Sigmoid colon (tissue), 7 donors: ENCODE measurements at regions of chr2 and their contacts with region 1.

Region 1: GRCh38 chr2:46097714-46098480 is 199.3 kb upstream of the EPAS1 start:
- DNase-seq: peak; percentile 90
- H3K4me3 ChIP-seq: no peak overlapping the region
- H3K27ac ChIP-seq: peak overlapping the region; percentile 64 to 78 (median 72)
- H3K4me1 ChIP-seq: peaks cover 0 to 26% (median 21%) of the 10 kb centered on the region in 4 donors
- H3K27me3 ChIP-seq: no peaks in the 10 kb centered on the region
- CTCF ChIP-seq: no peak
- EP300 ChIP-seq: peak in 2 of 4 donors; percentile 42 to 77
- POLR2A ChIP-seq: no peak

Region 2: GRCh38 chr2:46164581-46165301 is 66.8 kb after region 1 on chr2:
- intact Hi-C with region 1: loop called (anchors 5 kb)
- DNase-seq: peak; percentile 92
- H3K4me3 ChIP-seq: no peak overlapping the region
- H3K27ac ChIP-seq: peak overlapping the region; percentile 51 to 88 (median 74)
- H3K4me1 ChIP-seq: peaks cover 0 to 67% (median 41%) of the 10 kb centered on the region in 4 donors
- H3K27me3 ChIP-seq: no peaks in the 10 kb centered on the region
- CTCF ChIP-seq: no peak
- EP300 ChIP-seq: no peak
- POLR2A ChIP-seq: no peak

Region 3: DNA sequence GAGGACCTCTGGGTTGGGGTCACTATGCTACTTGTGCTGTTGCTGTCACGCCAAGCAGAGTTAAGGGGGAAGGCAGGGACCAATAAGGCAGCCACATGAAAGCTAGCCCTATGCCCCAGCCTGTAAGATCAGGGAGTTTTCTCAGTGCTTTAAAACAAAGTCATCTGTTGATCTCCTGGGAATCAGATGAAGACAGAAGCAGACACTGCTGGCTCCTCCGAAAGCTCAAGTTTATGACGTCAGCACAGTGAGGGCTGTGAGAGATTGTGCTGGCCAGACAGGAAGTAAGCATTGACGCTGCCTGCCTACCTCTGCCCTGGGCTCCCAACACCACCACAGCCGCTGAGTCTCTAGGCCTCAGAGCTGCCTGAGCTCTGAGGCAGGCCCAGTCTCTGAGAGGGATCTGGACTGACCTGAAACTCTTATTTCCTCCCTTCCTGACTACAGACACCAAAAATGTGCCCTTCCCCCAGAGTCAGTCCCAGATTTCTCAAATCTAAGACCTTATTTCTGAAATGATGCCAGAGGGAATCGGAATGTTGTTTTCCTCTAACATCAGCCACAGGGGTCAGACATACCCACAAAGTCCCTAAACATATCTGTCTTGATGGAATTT is 81.2 kb after region 1 on chr2:
- intact Hi-C with region 1: loop called (anchors 5 kb)
- DNase-seq: peak; percentile 90
- H3K4me3 ChIP-seq: no peak overlapping the region
- H3K27ac ChIP-seq: peak overlapping the region; percentile 33 to 70 (median 44)
- H3K4me1 ChIP-seq: peaks cover 0 to 23% (median 12%) of the 10 kb centered on the region in 4 donors
- H3K27me3 ChIP-seq: no peaks in the 10 kb centered on the region
- CTCF ChIP-seq: no peak
- EP300 ChIP-seq: no peak
- POLR2A ChIP-seq: no peak

Region 4: GRCh38 chr2:47402805-47403608 is 1305.1 kb after region 1 on chr2 and contains the start of gene MSH2:
- intact Hi-C with region 1: loop called (anchors 10 kb)
- DNase-seq: peak; percentile 95
- H3K4me3 ChIP-seq: peak within 1 kb of the TSS; percentile 70 to 91 (median 87)
- H3K27ac ChIP-seq: peak within 1 kb of the TSS; percentile 70 to 79 (median 74)
- H3K4me1 ChIP-seq: peaks cover 0 to 19% (median 15%) of the 10 kb centered on the region in 4 donors
- H3K27me3 ChIP-seq: no peaks in the 10 kb centered on the region
- CTCF ChIP-seq: no peak
- EP300 ChIP-seq: no peak
- POLR2A ChIP-seq: no peak
- total RNA-seq, gene MSH2: 8.0 to 13.9 (median 10.4) TPM